ENCODE measurements at regions of chr4 and their contacts with region 1.

Region 1: DNA sequence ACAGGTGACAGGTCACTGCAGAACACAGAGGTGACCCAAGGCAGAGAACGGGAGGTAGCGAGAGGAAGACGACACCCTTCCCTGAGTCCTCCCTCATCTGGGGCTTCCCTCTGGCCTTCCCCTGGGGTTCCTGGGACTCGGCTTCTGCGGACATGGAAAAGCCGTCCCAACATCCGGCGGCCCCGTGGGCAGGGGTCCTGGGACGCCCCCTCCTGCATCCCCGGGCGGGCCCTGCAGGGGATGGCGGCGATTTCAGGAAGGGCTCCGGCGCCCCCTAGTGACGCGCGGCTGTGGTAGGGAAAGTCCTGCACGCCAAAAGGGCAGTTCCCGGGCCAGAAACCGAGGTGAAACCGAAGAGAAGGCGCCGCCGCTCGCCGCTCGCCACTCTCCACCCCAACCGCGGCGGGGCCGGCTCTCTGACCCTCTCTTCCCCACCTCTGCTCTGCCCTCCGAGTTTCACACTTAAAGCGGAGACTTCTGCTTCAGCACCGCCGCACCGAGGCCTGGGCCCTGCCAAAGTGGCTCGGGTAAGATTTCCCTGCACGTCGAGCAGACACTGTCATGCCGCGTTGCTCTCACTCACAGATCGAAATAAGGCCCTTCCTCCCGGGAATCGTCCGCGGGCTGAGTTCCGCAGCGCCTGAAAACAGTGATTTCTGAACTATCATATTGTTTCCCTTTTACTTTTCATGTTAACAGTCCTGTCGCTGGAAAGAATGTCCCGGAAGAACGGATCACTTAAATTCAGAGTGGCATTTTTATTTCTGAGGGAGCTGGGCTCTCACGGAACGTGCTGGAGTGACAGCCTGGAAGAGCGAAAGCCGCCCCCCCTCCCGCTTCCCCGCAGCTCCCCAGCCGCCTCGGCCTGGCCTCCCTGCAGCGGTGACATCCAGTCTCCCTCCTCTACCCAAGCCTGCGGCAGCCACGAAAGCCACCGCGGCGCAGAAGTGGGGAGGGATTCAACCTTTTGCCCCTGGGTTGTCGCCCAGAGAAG is 110.6 kb downstream of the DCTD start:
- DNase-seq: peak; percentile 84
- ATAC-seq: peak; percentile 42
- H3K4me3 Mint-ChIP-seq: peak overlapping the region; percentile 59
- H3K27ac Mint-ChIP-seq: no peak overlapping the region
- H3K4me1 Mint-ChIP-seq: peaks cover 8% of the 10 kb centered on the region
- H3K27me3 Mint-ChIP-seq: peaks cover 4% of the 10 kb centered on the region

Region 2: DNA sequence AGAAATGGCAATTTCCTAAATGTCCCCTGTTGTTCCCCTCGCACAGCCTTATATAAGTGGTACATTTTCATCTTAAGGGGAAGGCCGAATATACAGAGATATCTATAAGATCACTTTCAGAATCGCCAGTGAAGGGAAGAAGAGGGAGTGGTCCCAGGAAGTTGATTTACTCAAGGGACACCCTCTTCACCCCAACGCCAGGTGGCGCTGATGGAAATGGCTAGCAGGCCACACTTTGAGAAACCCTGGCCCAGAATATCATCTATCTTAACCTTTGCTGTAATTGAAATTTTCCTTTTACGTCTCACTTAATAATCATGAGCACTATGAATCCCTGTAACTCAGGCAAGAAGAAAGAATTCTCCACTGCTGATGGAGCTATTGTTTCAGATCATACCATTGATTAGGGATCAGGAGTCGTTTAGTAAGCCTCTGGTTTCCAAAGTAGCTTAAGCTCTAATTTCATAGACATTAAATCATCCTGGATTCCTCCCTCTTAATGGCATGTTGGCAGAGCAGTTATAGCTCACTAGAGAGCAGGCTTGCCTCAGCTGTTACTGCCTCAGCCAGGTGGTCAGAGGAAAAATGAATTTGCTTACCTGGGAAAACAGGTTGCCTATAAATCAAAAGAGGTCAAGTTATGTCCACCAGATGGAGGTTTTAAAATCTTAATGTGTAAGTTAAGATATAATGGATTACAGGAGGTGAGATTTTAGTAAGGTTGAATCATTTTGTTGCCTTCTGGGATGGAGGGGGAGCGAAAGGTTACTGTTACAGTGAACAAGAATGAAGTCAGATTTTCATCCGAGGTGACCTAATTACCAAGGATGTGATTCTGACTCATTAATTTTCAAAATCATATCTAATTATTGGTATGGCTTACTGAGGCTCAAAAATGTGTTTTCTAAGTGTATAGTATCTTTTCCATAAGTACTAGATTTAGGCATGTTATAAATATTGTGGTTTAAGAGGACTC is 1504.5 kb before region 1 on chr4:
- CTCF ChIA-PET with region 1: no interaction called
- POLR2A ChIA-PET with region 1: no interaction called
- intact Hi-C with region 1: loop called in 1 of 2 experiments (anchors 1 kb)
- DNase-seq: peak; percentile 59
- ATAC-seq: no peak
- H3K4me3 Mint-ChIP-seq: no peak overlapping the region
- H3K27ac Mint-ChIP-seq: no peak overlapping the region
- H3K4me1 Mint-ChIP-seq: no peaks in the 10 kb centered on the region
- H3K27me3 Mint-ChIP-seq: no peaks in the 10 kb centered on the region

Region 3: GRCh38 chr4:182478475-182478874 is 328.1 kb before region 1 on chr4:
- CTCF ChIA-PET with region 1: interaction called, 3 read pairs
- POLR2A ChIA-PET with region 1: no interaction called
- intact Hi-C with region 1: loop called (anchors 1 kb)
- DNase-seq: no peak
- ATAC-seq: no peak
- H3K4me3 Mint-ChIP-seq: no peak overlapping the region
- H3K27ac Mint-ChIP-seq: no peak overlapping the region
- H3K4me1 Mint-ChIP-seq: no peaks in the 10 kb centered on the region
- H3K27me3 Mint-ChIP-seq: no peaks in the 10 kb centered on the region

Region 4: GRCh38 chr4:182917182-182918043 is 110.9 kb after region 1 on chr4 and contains the start of gene DCTD:
- CTCF ChIA-PET with region 1: no interaction called
- POLR2A ChIA-PET with region 1: no interaction called
- intact Hi-C with region 1: loop called (anchors 1 to 2 kb)
- DNase-seq: peak; percentile 89
- ATAC-seq: peak; percentile 69
- H3K4me3 Mint-ChIP-seq: peak within 1 kb of the TSS; percentile 79
- H3K27ac Mint-ChIP-seq: peak within 1 kb of the TSS; percentile 95
- H3K4me1 Mint-ChIP-seq: peaks cover 48% of the 10 kb centered on the region
- H3K27me3 Mint-ChIP-seq: no peaks in the 10 kb centered on the region
- total RNA-seq, gene DCTD: 119 to 128 TPM

Region 5: DNA sequence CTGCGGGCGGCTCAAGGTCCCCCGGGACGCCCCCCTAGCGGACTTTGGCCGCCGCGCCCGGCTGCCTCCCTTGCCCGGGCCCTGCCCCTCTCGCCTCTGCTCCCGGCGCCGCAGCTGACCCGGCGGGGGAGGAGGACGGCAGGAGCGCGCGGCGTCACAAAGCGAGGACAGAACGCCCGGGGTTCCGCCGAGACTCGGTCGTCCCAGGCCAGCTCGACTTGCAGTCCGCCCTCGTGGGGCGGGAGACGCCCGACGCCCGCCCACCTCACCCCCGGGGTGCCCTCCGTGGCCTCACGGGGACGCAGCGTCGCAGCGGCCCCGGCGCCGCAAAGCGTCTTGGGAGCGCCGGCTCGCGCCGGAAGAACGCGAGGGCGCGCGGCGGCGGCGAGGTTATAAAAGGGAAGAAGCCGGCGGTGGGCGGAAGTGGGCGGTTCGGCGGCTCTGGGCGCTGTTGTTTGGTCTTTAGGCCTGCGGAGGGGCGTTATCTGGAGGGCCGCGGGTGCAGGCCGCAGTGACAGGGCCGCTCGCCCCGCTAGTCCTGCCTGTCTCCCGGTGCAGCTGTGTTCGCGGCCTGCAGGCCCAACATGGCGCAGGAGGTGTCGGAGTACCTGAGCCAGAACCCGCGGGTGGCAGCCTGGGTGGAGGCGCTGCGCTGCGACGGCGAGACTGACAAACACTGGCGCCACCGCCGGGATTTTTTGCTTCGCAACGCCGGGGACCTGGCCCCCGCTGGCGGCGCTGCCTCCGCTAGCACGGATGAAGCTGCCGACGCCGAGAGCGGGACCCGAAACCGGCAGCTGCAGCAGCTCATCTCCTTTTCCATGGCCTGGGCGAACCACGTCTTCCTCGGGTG is 637.9 kb after region 1 on chr4 and contains the start of gene CDKN2AIP:
- CTCF ChIA-PET with region 1: no interaction called
- POLR2A ChIA-PET with region 1: no interaction called
- intact Hi-C with region 1: loop called in 1 of 2 experiments (anchors 1 kb)
- DNase-seq: peak; percentile 95
- ATAC-seq: peak; percentile 87
- H3K4me3 Mint-ChIP-seq: peak within 1 kb of the TSS; percentile 97
- H3K27ac Mint-ChIP-seq: peak within 1 kb of the TSS; percentile 97
- H3K4me1 Mint-ChIP-seq: peaks cover 42% of the 10 kb centered on the region
- H3K27me3 Mint-ChIP-seq: no peaks in the 10 kb centered on the region
- total RNA-seq, gene CDKN2AIP: 19.4 to 22.8 TPM